AG04450 (cell line): ENCODE measurements at regions of chr6 and their contacts with region 1.

Region 1: GRCh38 chr6:157614026-157614568 is 208.9 kb upstream of the SNX9 start:
- DNase-seq: no peak
- H3K4me3 ChIP-seq: no peak overlapping the region
- H3K27ac ChIP-seq: peak overlapping the region; percentile 91
- H3K27me3 ChIP-seq: no peaks in the 10 kb centered on the region
- CTCF ChIP-seq: no peak

Region 2: DNA sequence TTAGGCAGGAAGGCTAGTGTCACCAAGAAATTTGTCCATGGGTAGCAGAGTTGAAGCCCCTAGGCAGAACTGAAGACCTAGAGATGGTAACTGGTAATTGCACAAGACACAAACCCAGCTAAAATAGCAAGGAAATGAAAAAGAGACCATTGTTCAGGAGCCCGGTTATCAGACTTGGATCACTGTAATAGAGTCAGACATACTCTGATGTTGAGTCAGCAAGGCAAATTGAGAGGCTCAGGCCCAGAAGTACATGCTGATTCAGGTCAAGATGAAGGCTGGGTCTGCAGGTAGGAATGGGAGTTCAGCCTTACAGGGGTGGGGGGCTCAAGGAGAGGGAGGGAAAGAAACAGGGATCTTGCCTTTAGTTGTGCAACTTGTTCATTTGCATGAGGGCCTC is 284.3 kb before region 1 on chr6:
- CTCF ChIA-PET with region 1: no interaction called
- POLR2A ChIA-PET with region 1: no interaction called
- DNase-seq: no peak
- H3K4me3 ChIP-seq: no peak overlapping the region
- H3K27ac ChIP-seq: no peak overlapping the region
- H3K27me3 ChIP-seq: peaks cover 7% of the 10 kb centered on the region
- CTCF ChIP-seq: no peak

Region 3: GRCh38 chr6:157510323-157511188 is 103.5 kb before region 1 on chr6:
- CTCF ChIA-PET with region 1: no interaction called
- POLR2A ChIA-PET with region 1: no interaction called
- DNase-seq: no peak
- H3K4me3 ChIP-seq: no peak overlapping the region
- H3K27ac ChIP-seq: no peak overlapping the region
- H3K27me3 ChIP-seq: no peaks in the 10 kb centered on the region
- CTCF ChIP-seq: no peak

Region 4: DNA sequence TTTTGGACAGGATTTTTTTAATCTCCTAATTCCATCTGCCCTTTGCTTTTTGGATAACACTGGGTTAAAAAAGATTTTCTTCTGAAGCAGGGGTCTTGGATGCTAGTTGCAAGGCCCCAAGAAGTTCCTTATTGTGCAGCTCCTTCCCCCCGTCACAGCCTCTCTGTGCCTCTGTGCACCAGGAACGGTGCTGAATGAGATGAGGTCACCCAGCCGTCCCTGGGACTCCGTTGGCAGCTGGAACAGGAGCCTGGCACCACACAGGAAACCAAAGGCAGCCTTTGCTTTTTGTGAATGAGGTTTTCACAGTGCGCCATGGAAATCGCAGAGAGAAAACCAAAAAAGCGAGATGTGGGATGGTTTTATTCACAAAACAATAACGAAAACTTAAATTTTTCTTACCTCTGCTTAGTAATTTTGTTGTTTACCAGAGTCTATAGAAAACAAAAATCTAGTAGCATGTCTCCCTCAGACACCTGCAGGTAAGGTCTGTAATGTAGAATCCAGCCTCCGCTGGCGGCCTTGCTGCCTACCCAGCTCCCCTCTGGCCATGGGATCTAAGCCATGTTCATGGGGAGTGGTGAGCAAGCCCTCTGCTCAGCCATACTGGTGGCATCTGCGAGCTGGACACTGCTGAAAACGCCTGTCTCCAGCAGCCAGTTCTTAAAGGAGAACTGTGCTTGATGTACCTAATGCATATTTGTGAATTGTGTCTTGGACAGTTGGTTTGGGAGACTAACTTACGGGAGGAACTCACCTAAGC is 327.2 kb after region 1 on chr6:
- CTCF ChIA-PET with region 1: interaction called, 10 read pairs
- POLR2A ChIA-PET with region 1: no interaction called
- DNase-seq: no peak
- H3K4me3 ChIP-seq: no peak overlapping the region
- H3K27ac ChIP-seq: no peak overlapping the region
- H3K27me3 ChIP-seq: no peaks in the 10 kb centered on the region
- CTCF ChIP-seq: no peak